Activated B cell treated with CpG ODN at 0.5 μM for 24 hours (primary cell): ENCODE measurements at regions of chr3 and their contacts with region 1.

Region 1: DNA sequence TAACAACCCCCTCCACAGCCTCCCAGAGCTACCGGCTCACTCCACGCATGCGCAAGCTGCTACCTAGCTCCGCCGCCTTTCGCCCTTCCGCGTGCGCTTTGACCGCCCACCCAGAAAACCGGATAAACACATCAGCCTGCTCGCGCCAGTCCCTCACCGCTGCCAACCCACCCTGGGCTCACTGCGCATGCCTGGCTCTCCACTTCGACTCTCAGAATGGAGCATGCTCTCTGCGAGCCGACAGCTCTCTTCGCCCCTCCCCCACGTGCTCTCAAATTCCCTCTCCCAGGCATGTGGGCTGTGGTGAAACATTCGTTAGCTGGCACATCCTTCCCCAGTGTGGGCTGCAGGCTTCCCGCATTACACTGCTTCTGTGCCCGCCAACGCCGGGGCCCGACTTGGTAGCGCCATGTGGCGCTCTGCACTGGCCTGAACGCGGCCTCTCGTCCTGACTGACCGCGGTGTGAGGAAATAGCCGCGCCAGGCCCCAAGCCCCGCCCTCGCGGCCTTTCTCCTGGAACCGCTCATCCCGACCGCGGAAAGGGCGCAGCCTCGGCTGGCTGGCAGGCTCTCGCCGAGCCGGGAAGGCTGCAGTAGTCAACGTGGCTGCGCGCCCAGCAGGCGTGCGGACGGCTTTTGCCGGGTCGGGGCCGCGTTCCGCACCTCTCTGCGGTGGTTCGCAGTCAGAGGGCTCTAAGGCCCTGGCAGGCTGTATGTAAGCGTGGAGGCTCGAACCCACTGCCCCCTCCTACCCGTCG is 445 bp upstream of the MSL2 start:
- DNase-seq: peak; percentile 95
- ATAC-seq: peak; percentile 75
- H3K4me3 Mint-ChIP-seq: peak overlapping the region; percentile 99
- H3K27ac Mint-ChIP-seq: peak overlapping the region; percentile 94
- H3K4me1 Mint-ChIP-seq: peaks cover 47% of the 10 kb centered on the region
- H3K27me3 Mint-ChIP-seq: no peaks in the 10 kb centered on the region
- CTCF ChIP-seq: no peak

Region 2: GRCh38 chr3:136177876-136178275 is 18.7 kb before region 1 on chr3:
- CTCF ChIA-PET with region 1: no interaction called
- POLR2A ChIA-PET with region 1: interaction called, 57 read pairs
- intact Hi-C with region 1: loop called (anchors 2 kb)
- DNase-seq: no peak
- ATAC-seq: no peak
- H3K4me3 Mint-ChIP-seq: no peak overlapping the region
- H3K27ac Mint-ChIP-seq: no peak overlapping the region
- H3K4me1 Mint-ChIP-seq: peaks cover 67% of the 10 kb centered on the region
- H3K27me3 Mint-ChIP-seq: no peaks in the 10 kb centered on the region
- CTCF ChIP-seq: no peak

Region 3: DNA sequence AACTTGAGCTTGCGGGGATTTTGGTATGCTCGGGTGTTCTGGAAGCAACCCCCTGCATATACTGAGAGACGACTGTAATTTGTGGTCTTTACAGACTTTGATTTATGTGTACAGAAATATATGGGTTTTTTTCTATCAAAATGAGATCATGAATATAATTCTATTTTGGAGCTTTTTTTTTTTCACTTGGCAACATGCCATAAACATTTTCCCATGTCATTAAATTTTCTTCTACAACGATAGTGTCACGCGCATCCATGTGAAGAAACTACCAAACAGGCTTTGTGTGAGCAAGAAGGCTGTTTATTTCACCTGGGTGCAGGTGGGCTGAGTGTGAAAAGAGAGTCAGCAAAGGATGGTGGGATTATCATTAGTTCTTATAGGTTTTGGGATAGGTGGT is 20.6 kb after region 1 on chr3:
- CTCF ChIA-PET with region 1: no interaction called
- POLR2A ChIA-PET with region 1: no interaction called
- intact Hi-C with region 1: no loop called
- DNase-seq: no peak
- ATAC-seq: no peak
- H3K4me3 Mint-ChIP-seq: no peak overlapping the region
- H3K27ac Mint-ChIP-seq: no peak overlapping the region
- H3K4me1 Mint-ChIP-seq: no peaks in the 10 kb centered on the region
- H3K27me3 Mint-ChIP-seq: peaks cover 10% of the 10 kb centered on the region
- CTCF ChIP-seq: no peak

Region 4: GRCh38 chr3:136250226-136250902 is 53.8 kb after region 1 on chr3 and contains the start of gene PCCB:
- CTCF ChIA-PET with region 1: interaction called, 9 read pairs
- POLR2A ChIA-PET with region 1: interaction called, 84 read pairs
- intact Hi-C with region 1: loop called (anchors 1 kb)
- DNase-seq: peak; percentile 88
- ATAC-seq: peak; percentile 96
- H3K4me3 Mint-ChIP-seq: peak within 1 kb of the TSS; percentile 92
- H3K27ac Mint-ChIP-seq: peak within 1 kb of the TSS; percentile 95
- H3K4me1 Mint-ChIP-seq: peaks cover 23% of the 10 kb centered on the region
- H3K27me3 Mint-ChIP-seq: no peaks in the 10 kb centered on the region
- CTCF ChIP-seq: no peak
- total RNA-seq, gene PCCB: 31.2 and 31.8 TPM in 2 replicates

Region 5: GRCh38 chr3:136818769-136819391 is 622.3 kb after region 1 on chr3 and contains the start of gene SLC35G2:
- CTCF ChIA-PET with region 1: no interaction called
- POLR2A ChIA-PET with region 1: no interaction called
- intact Hi-C with region 1: loop called (anchors 1 kb)
- DNase-seq: peak; percentile 42
- ATAC-seq: peak; percentile 67
- H3K4me3 Mint-ChIP-seq: peak within 1 kb of the TSS; percentile 89
- H3K27ac Mint-ChIP-seq: peak within 1 kb of the TSS; percentile 87
- H3K4me1 Mint-ChIP-seq: peaks cover 22% of the 10 kb centered on the region
- H3K27me3 Mint-ChIP-seq: peaks cover 21% of the 10 kb centered on the region
- CTCF ChIP-seq: no peak
- total RNA-seq, gene SLC35G2: 4.2 and 4.3 TPM in 2 replicates

Region 6: DNA sequence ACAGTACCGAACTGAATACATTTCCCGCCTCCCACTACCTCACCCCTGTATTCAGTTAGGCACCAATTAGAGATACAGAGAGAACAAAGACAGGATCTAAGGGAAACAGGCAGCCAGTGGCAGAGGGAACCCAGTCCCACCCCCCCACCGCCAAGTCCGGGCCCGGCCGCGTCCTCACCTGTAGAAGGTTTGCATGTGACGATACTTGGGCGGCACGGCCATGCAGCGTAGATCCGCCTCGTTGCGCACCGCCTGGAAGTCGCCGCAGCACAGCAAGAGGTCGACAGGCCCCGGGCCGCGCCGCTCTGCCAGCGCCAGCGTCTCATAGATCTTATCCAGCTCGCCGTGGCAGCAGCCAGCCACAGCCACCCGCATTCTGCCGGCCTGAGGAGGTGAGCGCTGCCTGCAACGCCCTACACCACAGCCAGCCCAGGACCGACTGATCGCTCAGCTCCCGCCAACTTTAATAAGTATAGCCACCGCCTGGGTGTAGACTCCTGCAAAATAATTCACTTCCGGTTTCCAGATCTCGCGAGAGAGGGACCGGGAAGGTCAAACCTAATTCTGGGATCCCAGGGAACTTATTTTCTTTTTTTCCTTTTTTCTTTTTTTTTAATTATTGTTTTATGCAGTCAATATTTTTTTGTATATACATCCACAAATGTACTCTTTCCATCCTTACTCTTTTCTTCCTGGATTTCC is 1978.0 kb after region 1 on chr3 and contains the start of gene DBR1:
- CTCF ChIA-PET with region 1: no interaction called
- POLR2A ChIA-PET with region 1: interaction called, 5 read pairs
- intact Hi-C with region 1: loop called (anchors 5 kb)
- DNase-seq: peak; percentile 64
- ATAC-seq: peak; percentile 92
- H3K4me3 Mint-ChIP-seq: peak within 1 kb of the TSS; percentile 99
- H3K27ac Mint-ChIP-seq: peak within 1 kb of the TSS; percentile 98
- H3K4me1 Mint-ChIP-seq: peaks cover 29% of the 10 kb centered on the region
- H3K27me3 Mint-ChIP-seq: no peaks in the 10 kb centered on the region
- CTCF ChIP-seq: no peak
- total RNA-seq, gene DBR1: 19.6 and 19.9 TPM in 2 replicates